ENCODE measurements at regions of chr19 and their contacts with region 1.

Region 1: GRCh38 chr19:38891771-38892170 is 7.6 kb downstream of the SIRT2 start:
- DNase-seq: no peak
- ATAC-seq: no peak
- H3K4me3 ChIP-seq: no peak overlapping the region
- H3K4me3 Mint-ChIP-seq: no peak overlapping the region
- H3K27ac ChIP-seq: no peak overlapping the region
- H3K27ac Mint-ChIP-seq: no peak overlapping the region
- H3K4me1 ChIP-seq: peaks cover 0 to 3% of the 10 kb centered on the region in 2 donors
- H3K4me1 Mint-ChIP-seq: peaks cover 0 to 17% (median 8%) of the 10 kb centered on the region in 7 donors
- H3K27me3 ChIP-seq: no peaks in the 10 kb centered on the region
- H3K27me3 Mint-ChIP-seq: no peaks in the 10 kb centered on the region

Region 2: DNA sequence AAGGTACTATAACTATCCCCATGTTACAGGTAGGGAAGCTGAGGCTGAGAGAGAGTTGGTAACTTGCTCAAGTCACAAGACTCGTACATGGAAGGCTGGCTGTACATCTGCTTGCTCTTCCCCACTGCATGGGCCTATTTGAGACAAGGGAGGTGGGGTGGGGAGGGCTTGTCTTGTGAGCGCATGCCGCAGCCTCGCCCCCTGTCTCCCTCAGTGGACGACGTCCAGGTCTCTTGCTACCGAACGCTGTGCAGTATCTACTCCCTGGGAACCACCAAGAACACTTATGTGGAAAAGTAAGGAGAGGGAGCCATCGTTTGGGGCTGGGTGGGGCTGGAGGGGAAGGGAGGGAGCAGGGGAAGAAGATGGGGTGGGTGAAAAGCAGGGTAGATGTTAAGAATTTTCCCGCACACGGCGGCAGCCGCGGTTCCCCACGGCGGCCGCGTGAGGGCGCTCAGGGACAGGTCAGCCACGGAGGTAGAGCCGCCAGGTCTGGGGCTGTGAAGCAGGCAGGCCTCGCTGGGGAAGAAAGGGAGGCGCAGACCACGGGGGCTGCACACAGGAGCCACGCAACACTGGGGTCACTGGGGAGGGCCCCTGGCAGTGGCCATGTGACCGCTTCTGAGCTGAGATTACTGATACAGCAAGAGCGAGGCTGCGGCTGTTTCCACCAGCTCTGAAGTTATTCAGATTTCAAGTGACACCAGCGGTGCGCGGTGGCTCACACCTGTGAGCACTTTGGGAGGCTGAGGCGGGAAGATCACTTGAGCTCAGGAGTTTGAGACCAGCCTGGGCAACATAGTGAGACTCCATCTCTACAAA is 376.7 kb before region 1 on chr19:
- CTCF ChIA-PET with region 1: interaction called, 3 read pairs
- POLR2A ChIA-PET with region 1: no interaction called
- intact Hi-C with region 1: loop called in 1 of 2 experiments (anchors 1 kb)
- DNase-seq: peak; percentile 47 to 84 (median 74)
- ATAC-seq: peak; percentile 95
- H3K4me3 ChIP-seq: no peak overlapping the region
- H3K4me3 Mint-ChIP-seq: peak overlapping the region in 2 of 10 donors; percentile 16 to 45
- H3K27ac ChIP-seq: no peak overlapping the region
- H3K27ac Mint-ChIP-seq: peak overlapping the region in 3 of 9 donors; percentile 14 to 64 (median 60)
- H3K4me1 ChIP-seq: peaks cover 0 to 10% of the 10 kb centered on the region in 2 donors
- H3K4me1 Mint-ChIP-seq: peaks cover 6 to 30% (median 9%) of the 10 kb centered on the region in 7 donors
- H3K27me3 ChIP-seq: no peaks in the 10 kb centered on the region
- H3K27me3 Mint-ChIP-seq: peaks cover 0 to 4% (median 4%) of the 10 kb centered on the region in 5 donors

Region 3: GRCh38 chr19:38544034-38544958 is 347.5 kb before region 1 on chr19:
- CTCF ChIA-PET with region 1: interaction called, 3 read pairs
- POLR2A ChIA-PET with region 1: no interaction called
- intact Hi-C with region 1: loop called in 1 of 2 experiments (anchors 1 kb)
- DNase-seq: peak in 8 of 9 donors; percentile 36 to 68 (median 53)
- ATAC-seq: peak; percentile 88
- H3K4me3 ChIP-seq: no peak overlapping the region
- H3K4me3 Mint-ChIP-seq: peak overlapping the region in 7 of 10 donors; percentile 0 to 65 (median 45)
- H3K27ac ChIP-seq: no peak overlapping the region
- H3K27ac Mint-ChIP-seq: peak overlapping the region in 7 of 9 donors; percentile 1 to 85 (median 13)
- H3K4me1 ChIP-seq: peaks cover 4 to 14% of the 10 kb centered on the region in 2 donors
- H3K4me1 Mint-ChIP-seq: peaks cover 9 to 34% (median 19%) of the 10 kb centered on the region in 7 donors
- H3K27me3 ChIP-seq: no peaks in the 10 kb centered on the region
- H3K27me3 Mint-ChIP-seq: no peaks in the 10 kb centered on the region

Region 4: GRCh38 chr19:38729653-38730469 is 161.9 kb before region 1 on chr19:
- CTCF ChIA-PET with region 1: no interaction called
- POLR2A ChIA-PET with region 1: no interaction called
- intact Hi-C with region 1: loop called in 1 of 2 experiments (anchors 1 kb)
- DNase-seq: peak; percentile 58 to 83 (median 73)
- ATAC-seq: peak; percentile 78
- H3K4me3 ChIP-seq: no peak overlapping the region
- H3K4me3 Mint-ChIP-seq: no peak overlapping the region
- H3K27ac ChIP-seq: no peak overlapping the region
- H3K27ac Mint-ChIP-seq: peak overlapping the region in 3 of 9 donors; percentile 23 to 48 (median 30)
- H3K4me1 ChIP-seq: peaks cover 9 to 10% of the 10 kb centered on the region in 2 donors
- H3K4me1 Mint-ChIP-seq: peaks cover 5 to 39% (median 13%) of the 10 kb centered on the region in 7 donors
- H3K27me3 ChIP-seq: no peaks in the 10 kb centered on the region
- H3K27me3 Mint-ChIP-seq: no peaks in the 10 kb centered on the region

Region 5: GRCh38 chr19:38781058-38781457 is 110.7 kb before region 1 on chr19:
- CTCF ChIA-PET with region 1: no interaction called
- POLR2A ChIA-PET with region 1: no interaction called
- intact Hi-C with region 1: no loop called
- DNase-seq: no peak
- ATAC-seq: no peak
- H3K4me3 ChIP-seq: no peak overlapping the region
- H3K4me3 Mint-ChIP-seq: no peak overlapping the region
- H3K27ac ChIP-seq: no peak overlapping the region
- H3K27ac Mint-ChIP-seq: no peak overlapping the region
- H3K4me1 ChIP-seq: no peaks in the 10 kb centered on the region
- H3K4me1 Mint-ChIP-seq: no peaks in the 10 kb centered on the region
- H3K27me3 ChIP-seq: no peaks in the 10 kb centered on the region
- H3K27me3 Mint-ChIP-seq: peaks cover 0 to 27% (median 0%) of the 10 kb centered on the region in 5 donors

Region 6: DNA sequence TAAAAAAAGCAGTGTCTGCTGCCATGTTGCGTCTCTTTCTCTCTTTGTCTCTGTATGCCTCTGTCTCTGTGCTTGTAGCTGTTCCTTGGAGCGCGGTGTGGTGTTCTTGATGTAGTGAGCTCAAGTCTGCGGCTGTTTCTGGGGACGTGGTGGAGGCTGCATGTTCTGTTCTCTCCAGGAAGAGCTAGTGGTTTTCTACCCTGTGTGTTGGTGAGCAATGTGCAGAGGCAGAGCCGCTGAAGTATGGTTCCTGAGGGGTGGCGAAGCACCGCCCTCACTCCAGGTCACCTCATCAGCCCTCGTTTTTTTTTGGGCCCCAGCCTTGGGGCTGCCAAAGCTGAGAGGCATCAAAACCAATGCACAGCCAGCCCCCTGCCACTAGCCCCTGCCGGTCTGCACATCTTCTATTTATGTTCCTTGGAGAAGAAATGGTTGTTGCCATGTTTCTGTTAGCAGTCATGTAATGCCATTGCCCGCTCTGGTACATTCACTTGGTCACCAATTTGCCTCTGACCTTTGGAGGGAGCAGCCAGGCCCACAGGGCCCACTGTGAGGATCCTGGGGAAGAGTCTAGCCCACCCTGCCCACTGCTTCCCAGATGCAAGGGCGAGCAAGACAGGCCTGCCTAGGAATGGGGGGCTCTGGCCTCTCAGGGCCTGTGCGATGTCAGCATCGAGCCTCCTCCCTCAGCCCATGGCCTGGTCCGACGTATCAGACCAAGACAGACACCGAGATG is 49.2 kb before region 1 on chr19:
- CTCF ChIA-PET with region 1: interaction called, 7 read pairs
- POLR2A ChIA-PET with region 1: interaction called, 3 read pairs
- intact Hi-C with region 1: loop called in 1 of 2 experiments (anchors 1 kb)
- DNase-seq: peak in 6 of 9 donors; percentile 57 to 80 (median 76)
- ATAC-seq: peak; percentile 80
- H3K4me3 ChIP-seq: peak overlapping the region; percentile 24
- H3K4me3 Mint-ChIP-seq: peak overlapping the region; percentile 67 to 93 (median 83)
- H3K27ac ChIP-seq: peak overlapping the region; percentile 67
- H3K27ac Mint-ChIP-seq: peak overlapping the region; percentile 89 to 99 (median 92)
- H3K4me1 ChIP-seq: peaks cover 45 to 66% of the 10 kb centered on the region in 2 donors
- H3K4me1 Mint-ChIP-seq: peaks cover 50 to 83% (median 73%) of the 10 kb centered on the region in 7 donors
- H3K27me3 ChIP-seq: no peaks in the 10 kb centered on the region
- H3K27me3 Mint-ChIP-seq: no peaks in the 10 kb centered on the region

Region 7: DNA sequence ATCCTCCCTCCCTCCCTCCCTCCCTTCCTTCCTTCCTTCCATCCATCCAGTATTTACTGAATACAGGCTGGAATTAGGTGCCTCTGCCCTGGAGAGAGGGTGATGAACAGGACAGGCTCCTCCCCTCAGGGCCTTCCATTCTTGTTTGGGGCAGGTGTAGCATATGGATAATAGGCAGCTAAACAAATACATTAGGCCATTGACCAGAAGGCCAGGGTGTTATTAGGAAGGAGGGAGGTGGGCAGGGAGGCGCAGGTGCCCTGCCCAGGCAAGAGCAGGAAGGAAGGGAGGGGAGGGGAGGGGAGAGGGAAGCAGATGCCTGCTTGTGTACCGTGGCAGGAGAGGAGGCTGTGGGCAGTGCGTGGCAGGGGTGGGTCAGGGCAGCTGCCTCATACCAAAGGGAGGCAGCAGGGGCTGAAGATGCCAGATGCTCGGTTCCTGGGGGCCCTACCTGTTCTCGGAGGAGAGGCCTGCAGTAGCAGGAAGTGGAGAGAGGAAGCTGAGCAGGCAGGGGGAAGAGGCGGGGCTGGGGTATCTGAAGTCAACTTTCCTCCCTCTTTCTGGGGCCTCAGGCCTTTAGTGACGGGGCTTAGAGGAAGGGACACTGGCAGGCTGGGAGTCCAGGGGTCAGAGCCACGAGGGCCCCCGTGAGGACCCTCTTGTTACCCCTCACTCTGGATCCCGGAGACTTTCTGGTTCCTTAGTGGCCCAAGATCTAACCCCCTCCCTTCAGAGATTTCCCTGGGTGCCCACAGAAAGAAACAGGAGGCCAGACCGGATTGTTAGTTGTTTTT is 13.8 kb before region 1 on chr19 and contains the start of gene RINL:
- CTCF ChIA-PET with region 1: interaction called, 18 read pairs
- POLR2A ChIA-PET with region 1: interaction called, 13 read pairs
- intact Hi-C with region 1: loop called in 1 of 2 experiments (anchors 1 kb)
- DNase-seq: peak; percentile 41 to 78 (median 74)
- ATAC-seq: peak; percentile 94
- H3K4me3 ChIP-seq: peak within 1 kb of the TSS; percentile 60
- H3K4me3 Mint-ChIP-seq: peak within 1 kb of the TSS; percentile 58 to 98 (median 88)
- H3K27ac ChIP-seq: peak within 1 kb of the TSS; percentile 93
- H3K27ac Mint-ChIP-seq: peak within 1 kb of the TSS; percentile 95 to 99 (median 97)
- H3K4me1 ChIP-seq: peaks cover 22 to 30% of the 10 kb centered on the region in 2 donors
- H3K4me1 Mint-ChIP-seq: peaks cover 15 to 47% (median 30%) of the 10 kb centered on the region in 7 donors
- H3K27me3 ChIP-seq: no peaks in the 10 kb centered on the region
- H3K27me3 Mint-ChIP-seq: no peaks in the 10 kb centered on the region
- total RNA-seq, gene RINL: 32.8 to 75.9 (median 64.0) TPM

Measured in naive thymus-derived CD4-positive, alpha-beta T cell (primary cell).